ENCODE measurements at regions of chr10 and their contacts with region 1.

Region 1: GRCh38 chr10:7260412-7260900 is 150.4 kb downstream of the SFMBT2 start:
- DNase-seq: peak; percentile 71
- H3K4me3 Mint-ChIP-seq: peak overlapping the region; percentile 31
- H3K27ac Mint-ChIP-seq: peak overlapping the region; percentile 65
- H3K4me1 Mint-ChIP-seq: peaks cover 57% of the 10 kb centered on the region
- H3K27me3 Mint-ChIP-seq: no peaks in the 10 kb centered on the region

Region 2: DNA sequence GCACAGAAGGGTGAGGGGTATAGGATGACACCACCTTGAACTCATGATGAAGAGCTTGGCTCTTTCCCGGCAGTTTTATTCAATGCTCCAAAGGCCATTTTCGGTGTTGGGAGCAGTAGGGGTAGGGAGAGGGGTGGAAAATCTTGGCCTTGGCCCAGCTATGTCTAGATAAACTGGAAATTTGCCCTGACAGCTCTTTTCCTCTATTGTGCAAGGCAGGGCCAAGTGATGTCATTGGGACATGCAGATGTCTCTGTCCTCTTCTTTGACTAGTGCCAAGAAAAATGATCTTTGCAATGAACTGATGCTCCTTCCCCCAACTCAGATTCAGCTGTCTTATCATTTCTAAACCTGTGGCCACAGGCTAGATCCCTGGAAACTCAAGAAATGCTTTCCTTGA is 652.7 kb before region 1 on chr10:
- intact Hi-C with region 1: no loop called
- DNase-seq: no peak
- H3K4me3 Mint-ChIP-seq: no peak overlapping the region
- H3K27ac Mint-ChIP-seq: peak overlapping the region; percentile 91
- H3K4me1 Mint-ChIP-seq: peaks cover 61% of the 10 kb centered on the region
- H3K27me3 Mint-ChIP-seq: no peaks in the 10 kb centered on the region

Region 3: DNA sequence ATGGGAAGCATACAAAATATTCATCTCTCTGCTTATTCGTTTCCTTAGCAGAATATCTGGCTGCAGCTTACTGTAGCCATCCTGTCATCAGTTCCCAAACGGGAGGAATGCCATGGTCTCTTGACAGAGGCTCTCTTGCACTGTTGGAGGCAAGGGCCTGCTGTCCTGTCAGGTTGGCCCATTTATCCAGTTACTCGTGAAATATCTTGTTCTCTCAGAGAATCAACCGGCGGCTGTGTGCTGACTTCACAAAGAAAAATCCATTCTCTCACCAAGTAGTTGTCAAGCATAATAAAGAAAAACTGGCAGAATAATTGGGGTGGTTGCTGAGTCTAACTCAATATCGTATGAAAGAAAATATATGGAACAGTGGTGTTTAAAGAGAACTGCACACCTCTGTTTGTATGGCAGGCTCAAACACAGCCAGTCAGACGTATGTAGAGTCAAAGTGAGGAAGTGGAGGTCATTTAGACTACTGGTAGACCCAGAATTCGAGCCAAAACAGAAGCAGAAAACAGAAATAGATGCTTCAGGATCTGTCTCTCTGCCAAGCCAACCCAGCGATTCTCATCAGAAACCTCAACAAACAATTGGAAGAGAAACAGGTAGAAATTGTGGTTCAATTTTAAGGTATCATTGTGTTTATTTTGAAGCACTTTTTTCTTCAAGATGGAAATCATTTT is 331.2 kb before region 1 on chr10:
- intact Hi-C with region 1: loop called (anchors 5 kb)
- DNase-seq: no peak
- H3K4me3 Mint-ChIP-seq: no peak overlapping the region
- H3K27ac Mint-ChIP-seq: no peak overlapping the region
- H3K4me1 Mint-ChIP-seq: peaks cover 45% of the 10 kb centered on the region
- H3K27me3 Mint-ChIP-seq: no peaks in the 10 kb centered on the region

Region 4: GRCh38 chr10:7121154-7121810 is 139.2 kb before region 1 on chr10:
- intact Hi-C with region 1: loop called (anchors 5 kb)
- DNase-seq: peak; percentile 90
- H3K4me3 Mint-ChIP-seq: no peak overlapping the region
- H3K27ac Mint-ChIP-seq: no peak overlapping the region
- H3K4me1 Mint-ChIP-seq: peaks cover 4% of the 10 kb centered on the region
- H3K27me3 Mint-ChIP-seq: peaks cover 44% of the 10 kb centered on the region

Region 5: GRCh38 chr10:7192831-7193361 is 67.6 kb before region 1 on chr10:
- intact Hi-C with region 1: loop called (anchors 1 kb)
- DNase-seq: peak; percentile 93
- H3K4me3 Mint-ChIP-seq: peak overlapping the region; percentile 80
- H3K27ac Mint-ChIP-seq: peak overlapping the region; percentile 95
- H3K4me1 Mint-ChIP-seq: peaks cover 59% of the 10 kb centered on the region
- H3K27me3 Mint-ChIP-seq: no peaks in the 10 kb centered on the region

Region 6: DNA sequence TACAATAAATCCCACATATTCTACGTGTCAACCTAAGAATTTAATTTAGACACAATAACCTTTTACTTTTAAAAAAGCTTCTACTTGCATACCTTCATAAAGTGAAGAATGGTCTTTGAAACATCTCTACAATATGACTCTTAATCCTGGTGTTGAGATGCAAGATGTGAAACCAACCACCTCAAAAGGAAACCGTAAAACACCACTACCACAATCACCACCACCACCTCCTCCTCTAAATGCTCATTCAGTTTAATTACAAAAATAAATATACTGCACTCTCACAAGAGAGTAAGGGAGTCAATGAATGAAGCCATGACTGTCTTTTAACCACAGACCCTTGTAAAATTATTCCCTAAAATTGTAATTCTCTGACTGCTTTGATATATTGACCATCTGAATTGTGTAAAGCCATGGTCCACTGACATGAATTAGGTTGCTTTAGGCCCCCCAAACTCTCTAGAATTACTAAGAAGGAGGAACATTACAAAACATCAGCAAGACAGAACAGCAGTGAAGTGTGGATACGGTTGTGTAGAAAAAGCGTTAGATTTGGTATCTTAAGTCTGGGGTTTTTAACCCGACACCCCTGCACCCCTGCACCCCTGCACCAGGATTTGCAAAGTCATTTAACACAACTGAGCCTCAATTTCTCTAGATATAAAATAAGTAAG is 21.0 kb before region 1 on chr10:
- intact Hi-C with region 1: loop called (anchors 1 kb)
- DNase-seq: peak; percentile 79
- H3K4me3 Mint-ChIP-seq: peak overlapping the region; percentile 14
- H3K27ac Mint-ChIP-seq: peak overlapping the region; percentile 46
- H3K4me1 Mint-ChIP-seq: peaks cover 50% of the 10 kb centered on the region
- H3K27me3 Mint-ChIP-seq: peaks cover 2% of the 10 kb centered on the region

Region 7: DNA sequence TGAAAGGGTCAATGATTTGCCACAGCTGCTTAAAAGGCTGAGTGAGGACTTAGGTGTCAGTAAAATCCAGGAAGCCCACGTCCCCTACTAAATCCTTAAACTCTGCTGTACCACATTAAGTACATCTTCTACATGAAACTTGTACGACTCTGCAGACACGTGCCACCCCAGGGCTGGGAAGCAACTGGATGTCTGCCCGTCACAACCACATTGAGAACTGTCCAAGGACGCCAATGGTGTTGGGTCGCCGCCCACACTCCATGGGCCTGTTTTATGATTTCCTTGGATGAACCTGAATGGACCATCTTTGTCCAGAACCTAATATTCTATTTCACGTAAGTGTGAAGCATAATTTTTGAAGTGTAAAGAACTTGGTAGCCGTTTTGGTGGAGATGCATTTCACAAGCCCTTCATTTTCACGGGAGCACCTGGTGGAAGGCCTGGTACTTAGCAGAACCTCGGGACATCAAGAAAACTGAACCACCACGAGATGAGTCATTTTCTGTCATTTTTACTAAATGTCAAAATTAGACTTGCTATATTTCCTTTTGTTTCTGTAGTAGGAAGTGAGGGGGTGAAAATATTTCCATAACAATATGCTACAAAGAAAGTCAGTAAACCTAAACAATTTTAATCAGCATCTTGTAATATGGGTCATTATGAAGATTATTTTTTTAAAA is 15.4 kb after region 1 on chr10:
- intact Hi-C with region 1: loop called (anchors 1 kb)
- DNase-seq: no peak
- H3K4me3 Mint-ChIP-seq: peak overlapping the region; percentile 21
- H3K27ac Mint-ChIP-seq: peak overlapping the region; percentile 81
- H3K4me1 Mint-ChIP-seq: peaks cover 50% of the 10 kb centered on the region
- H3K27me3 Mint-ChIP-seq: no peaks in the 10 kb centered on the region

Region 8: DNA sequence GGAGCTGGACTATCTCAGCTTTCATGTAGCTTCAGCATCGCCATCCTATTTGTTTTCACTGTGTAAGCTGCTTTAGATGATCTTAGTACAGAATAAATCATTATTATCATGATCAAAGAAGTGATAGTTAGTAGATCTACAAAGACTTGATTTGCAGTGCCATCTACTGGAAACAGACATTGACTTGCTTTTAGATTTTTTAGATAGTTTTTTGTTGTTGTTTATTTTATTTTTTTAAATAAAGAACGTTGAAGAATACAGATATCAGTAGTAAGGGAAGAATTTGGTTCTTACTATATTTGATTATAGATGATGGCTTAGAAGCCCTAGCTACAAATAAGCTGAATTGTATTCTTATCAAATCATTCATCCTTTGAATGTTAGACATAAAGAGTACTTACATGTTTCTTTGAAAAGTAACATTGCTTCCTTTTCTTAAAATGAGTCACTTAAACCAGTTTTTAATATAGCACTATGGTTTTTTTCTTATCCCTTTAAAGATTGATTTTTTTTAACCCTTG is 156.7 kb after region 1 on chr10:
- intact Hi-C with region 1: loop called (anchors 2 kb)
- DNase-seq: peak; percentile 64
- H3K4me3 Mint-ChIP-seq: no peak overlapping the region
- H3K27ac Mint-ChIP-seq: no peak overlapping the region
- H3K4me1 Mint-ChIP-seq: peaks cover 27% of the 10 kb centered on the region
- H3K27me3 Mint-ChIP-seq: peaks cover 30% of the 10 kb centered on the region

Measured in activated CD4-positive, alpha-beta T cell treated with anti-CD3 and anti-CD28 coated beads, Interleukin-2, amount 10 ng/mL, durations not matched to agents 24 days and 14 days (primary cell).